ENCODE measurements at regions of chr7 and their contacts with region 1.

Region 1: DNA sequence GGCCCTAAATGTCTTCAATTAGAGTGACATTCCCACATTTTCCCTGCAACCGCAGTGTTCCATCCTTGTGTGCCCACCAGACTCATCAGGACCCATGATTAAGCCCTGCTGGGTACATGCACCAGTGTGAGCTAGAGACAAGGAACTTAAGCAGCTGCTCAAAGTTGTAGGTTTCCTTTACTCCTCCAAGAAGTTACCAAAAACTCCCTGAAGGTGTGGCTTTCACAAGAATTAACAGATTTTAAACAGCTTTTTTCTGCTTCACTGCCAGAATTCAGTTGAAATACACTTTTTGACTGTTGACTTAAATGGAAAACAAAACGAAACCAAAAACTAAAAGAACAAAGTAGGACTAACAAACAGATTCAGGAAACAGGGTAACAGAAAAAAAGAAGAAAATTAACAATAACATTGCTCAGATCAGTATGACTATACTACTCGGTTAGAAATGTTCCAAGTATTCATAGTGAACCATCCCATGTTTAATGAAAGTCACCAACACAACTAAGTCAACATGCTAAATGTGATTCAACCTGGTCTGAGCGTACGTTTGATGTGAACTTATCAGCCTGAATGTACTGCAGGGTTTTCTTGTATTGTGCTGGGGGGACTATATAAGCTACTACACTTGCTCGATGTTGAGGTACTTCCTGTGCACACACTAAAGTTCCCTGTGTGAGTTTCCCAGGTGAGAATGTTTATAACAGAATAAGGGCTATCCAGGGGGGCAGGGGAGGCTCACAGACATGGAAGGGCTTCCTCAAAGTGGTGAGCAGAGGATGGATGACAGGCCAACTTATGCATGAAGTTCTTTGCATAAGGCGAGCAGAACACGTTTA is 22.2 kb downstream of the SLC37A3 start:
- DNase-seq: peak in 8 of 9 donors; percentile 34 to 71 (median 56)
- ATAC-seq: peak; percentile 89
- H3K4me3 ChIP-seq: peak overlapping the region; percentile 58
- H3K4me3 Mint-ChIP-seq: peak overlapping the region; percentile 67 to 92 (median 84)
- H3K27ac ChIP-seq: peak overlapping the region; percentile 75
- H3K27ac Mint-ChIP-seq: peak overlapping the region; percentile 87 to 97 (median 93)
- H3K4me1 ChIP-seq: peaks cover 6 to 10% of the 10 kb centered on the region in 2 donors
- H3K4me1 Mint-ChIP-seq: peaks cover 0 to 48% (median 20%) of the 10 kb centered on the region in 7 donors
- H3K27me3 ChIP-seq: no peaks in the 10 kb centered on the region
- H3K27me3 Mint-ChIP-seq: no peaks in the 10 kb centered on the region

Region 2: GRCh38 chr7:139109188-139109982 is 1266.7 kb before region 1 on chr7 and contains the start of gene ZC3HAV1:
- CTCF ChIA-PET with region 1: no interaction called
- POLR2A ChIA-PET with region 1: no interaction called
- intact Hi-C with region 1: loop called in 1 of 2 experiments (anchors 10 kb)
- DNase-seq: peak; percentile 68 to 94 (median 90)
- ATAC-seq: peak; percentile 91
- H3K4me3 ChIP-seq: peak within 1 kb of the TSS; percentile 80
- H3K4me3 Mint-ChIP-seq: peak within 1 kb of the TSS; percentile 92 to 100 (median 98)
- H3K27ac ChIP-seq: peak within 1 kb of the TSS; percentile 93
- H3K27ac Mint-ChIP-seq: peak within 1 kb of the TSS; percentile 96 to 100 (median 98)
- H3K4me1 ChIP-seq: peaks cover 13 to 22% of the 10 kb centered on the region in 2 donors
- H3K4me1 Mint-ChIP-seq: peaks cover 24 to 49% (median 42%) of the 10 kb centered on the region in 7 donors
- H3K27me3 ChIP-seq: no peaks in the 10 kb centered on the region
- H3K27me3 Mint-ChIP-seq: no peaks in the 10 kb centered on the region
- total RNA-seq, gene ZC3HAV1: 129 to 181 (median 152) TPM

Region 3: GRCh38 chr7:140342727-140343514 is 33.2 kb before region 1 on chr7:
- CTCF ChIA-PET with region 1: no interaction called
- POLR2A ChIA-PET with region 1: interaction called, 12 read pairs
- intact Hi-C with region 1: no loop called
- DNase-seq: no peak
- ATAC-seq: peak; percentile 88
- H3K4me3 ChIP-seq: no peak overlapping the region
- H3K4me3 Mint-ChIP-seq: no peak overlapping the region
- H3K27ac ChIP-seq: no peak overlapping the region
- H3K27ac Mint-ChIP-seq: no peak overlapping the region
- H3K4me1 ChIP-seq: no peaks in the 10 kb centered on the region
- H3K4me1 Mint-ChIP-seq: peaks cover 0 to 2% (median 0%) of the 10 kb centered on the region in 7 donors
- H3K27me3 ChIP-seq: no peaks in the 10 kb centered on the region
- H3K27me3 Mint-ChIP-seq: no peaks in the 10 kb centered on the region

Region 4: GRCh38 chr7:140358412-140359051 is 17.6 kb before region 1 on chr7:
- CTCF ChIA-PET with region 1: no interaction called
- POLR2A ChIA-PET with region 1: no interaction called
- intact Hi-C with region 1: loop called in 1 of 2 experiments (anchors 1 kb)
- DNase-seq: peak in 1 of 9 donors; percentile 29
- ATAC-seq: peak; percentile 83
- H3K4me3 ChIP-seq: peak overlapping the region; percentile 29
- H3K4me3 Mint-ChIP-seq: peak overlapping the region in 9 of 10 donors; percentile 72 to 92 (median 80)
- H3K27ac ChIP-seq: no peak overlapping the region
- H3K27ac Mint-ChIP-seq: peak overlapping the region in 8 of 9 donors; percentile 5 to 99 (median 86)
- H3K4me1 ChIP-seq: peaks cover 0 to 7% of the 10 kb centered on the region in 2 donors
- H3K4me1 Mint-ChIP-seq: peaks cover 14 to 34% (median 25%) of the 10 kb centered on the region in 7 donors
- H3K27me3 ChIP-seq: no peaks in the 10 kb centered on the region
- H3K27me3 Mint-ChIP-seq: no peaks in the 10 kb centered on the region

Region 5: DNA sequence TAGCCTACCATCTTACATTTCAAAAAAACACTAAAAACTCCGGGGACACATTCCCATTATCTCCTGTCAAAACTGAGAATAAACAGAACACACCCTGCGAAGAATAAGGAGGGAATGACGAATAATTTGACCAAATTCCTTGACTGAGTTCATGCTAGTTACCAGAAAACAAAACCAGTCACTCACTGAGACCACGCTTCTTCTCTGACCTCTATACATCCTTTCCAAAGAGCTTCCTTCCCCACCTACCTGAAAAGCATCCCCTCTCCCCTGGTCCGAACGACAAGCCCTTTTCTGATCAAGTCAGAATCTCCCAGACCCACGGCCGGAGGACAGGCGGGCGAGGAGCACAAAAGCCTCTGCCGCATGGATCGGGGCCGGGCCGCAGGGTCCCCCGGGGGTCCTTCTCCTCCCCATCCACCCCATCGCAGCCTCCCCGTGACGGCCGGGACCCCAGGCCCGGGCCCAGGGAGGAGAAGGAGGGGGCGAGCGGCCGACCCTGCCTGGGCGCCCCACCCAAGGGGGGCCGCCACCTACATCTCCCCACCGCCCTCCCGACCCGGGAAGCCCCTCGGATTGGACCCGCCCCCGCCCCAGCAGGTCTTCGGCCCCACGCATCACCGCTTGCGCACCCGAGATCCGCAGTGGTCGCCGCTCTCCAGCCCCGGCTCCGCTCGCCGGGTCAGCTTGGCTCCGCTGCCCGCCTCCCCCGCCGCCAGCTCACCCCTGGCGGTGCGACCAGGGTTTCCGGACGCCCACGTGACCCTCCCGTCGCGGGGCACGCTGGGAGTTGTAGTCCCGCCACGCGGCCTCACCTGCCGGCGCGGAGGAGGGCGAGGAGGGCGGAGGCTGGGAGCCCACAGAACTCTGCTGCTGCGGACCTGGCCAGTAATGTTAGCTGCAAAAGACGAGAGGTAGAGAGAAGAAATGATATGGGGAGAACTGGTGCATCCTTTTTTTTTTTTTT is 22.0 kb after region 1 on chr7 and contains the start of gene SLC37A3:
- CTCF ChIA-PET with region 1: interaction called, 5 read pairs
- POLR2A ChIA-PET with region 1: interaction called, 13 read pairs
- intact Hi-C with region 1: loop called (anchors 1 kb)
- DNase-seq: peak; percentile 74 to 93 (median 80)
- ATAC-seq: peak; percentile 97
- H3K4me3 ChIP-seq: peak within 1 kb of the TSS; percentile 67
- H3K4me3 Mint-ChIP-seq: peak within 1 kb of the TSS; percentile 79 to 95 (median 90)
- H3K27ac ChIP-seq: peak within 1 kb of the TSS; percentile 84
- H3K27ac Mint-ChIP-seq: peak within 1 kb of the TSS; percentile 14 to 92 (median 85)
- H3K4me1 ChIP-seq: peaks cover 0 to 15% of the 10 kb centered on the region in 2 donors
- H3K4me1 Mint-ChIP-seq: peaks cover 22 to 41% (median 31%) of the 10 kb centered on the region in 7 donors
- H3K27me3 ChIP-seq: no peaks in the 10 kb centered on the region
- H3K27me3 Mint-ChIP-seq: no peaks in the 10 kb centered on the region
- total RNA-seq, gene SLC37A3: 26.8 to 72.7 (median 39.4) TPM

Region 6: GRCh38 chr7:140403878-140404564 is 27.9 kb after region 1 on chr7 and contains the start of gene RAB19:
- CTCF ChIA-PET with region 1: no interaction called
- POLR2A ChIA-PET with region 1: interaction called, 13 read pairs
- intact Hi-C with region 1: loop called (anchors 1 to 2 kb)
- DNase-seq: peak; percentile 7 to 67 (median 56)
- ATAC-seq: peak; percentile 87
- H3K4me3 ChIP-seq: peak within 1 kb of the TSS; percentile 82
- H3K4me3 Mint-ChIP-seq: peak within 1 kb of the TSS; percentile 92 to 99 (median 97)
- H3K27ac ChIP-seq: peak within 1 kb of the TSS; percentile 87
- H3K27ac Mint-ChIP-seq: peak within 1 kb of the TSS; percentile 91 to 99 (median 96)
- H3K4me1 ChIP-seq: peaks cover 8 to 11% of the 10 kb centered on the region in 2 donors
- H3K4me1 Mint-ChIP-seq: peaks cover 13 to 42% (median 29%) of the 10 kb centered on the region in 7 donors
- H3K27me3 ChIP-seq: no peaks in the 10 kb centered on the region
- H3K27me3 Mint-ChIP-seq: peaks cover 0 to 3% (median 0%) of the 10 kb centered on the region in 5 donors
- total RNA-seq, gene RAB19: 1.8 to 13.3 (median 3.3) TPM

Measured in naive thymus-derived CD4-positive, alpha-beta T cell (primary cell).